PC-3 (cell line): ENCODE measurements at regions of chr4 and their contacts with region 1.

Region 1: DNA sequence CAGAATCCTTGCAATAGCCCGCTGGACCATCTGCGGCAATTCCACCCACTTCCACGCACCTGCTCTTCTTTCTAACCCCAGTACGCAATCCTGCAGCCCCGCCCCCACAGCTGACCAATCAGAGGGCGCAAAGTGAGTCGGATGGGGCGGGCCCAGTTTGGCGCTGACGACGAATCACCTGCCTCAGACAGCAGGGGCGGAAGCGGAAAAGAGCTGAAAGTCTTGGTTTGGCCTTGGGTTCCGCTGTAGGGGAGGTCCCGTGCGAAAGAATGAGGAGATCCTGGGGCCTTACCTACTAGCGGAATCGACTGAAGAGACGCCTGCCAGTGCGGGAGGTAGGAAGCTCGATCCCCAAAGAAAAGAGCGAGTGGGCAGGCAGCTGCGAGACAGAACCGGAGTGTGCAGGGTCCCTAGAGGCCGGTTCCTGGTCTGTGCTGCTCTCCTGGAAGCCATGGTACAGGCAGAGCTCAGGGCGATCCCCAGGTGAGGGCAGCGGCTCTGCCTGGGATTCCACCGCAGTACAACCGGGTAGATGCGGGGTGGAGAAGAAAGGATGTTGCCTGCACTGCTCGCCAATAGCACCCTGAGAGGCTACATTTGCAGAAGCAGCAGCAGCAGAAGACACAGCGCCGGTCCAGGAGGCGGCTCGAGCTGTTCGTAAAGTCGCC is at the start of gene TMEM184C:
- DNase-seq: peak; percentile 95
- ATAC-seq: peak; percentile 97
- H3K4me3 ChIP-seq: peak within 1 kb of the TSS; percentile 91
- H3K27ac ChIP-seq: peak within 1 kb of the TSS; percentile 65
- H3K4me1 ChIP-seq: peaks cover 17% of the 10 kb centered on the region
- H3K27me3 ChIP-seq: no peaks in the 10 kb centered on the region
- CTCF ChIP-seq: no peak
- total RNA-seq, gene TMEM184C: 17.5 and 19.8 TPM in 2 replicates

Region 2: GRCh38 chr4:147683717-147684700 is 66.7 kb after region 1 on chr4 and contains the start of gene PRMT9:
- CTCF ChIA-PET with region 1: no interaction called
- POLR2A ChIA-PET with region 1: no interaction called
- intact Hi-C with region 1: loop called (anchors 5 kb)
- DNase-seq: peak; percentile 87
- ATAC-seq: peak; percentile 97
- H3K4me3 ChIP-seq: peak within 1 kb of the TSS; percentile 93
- H3K27ac ChIP-seq: peak within 1 kb of the TSS; percentile 65
- H3K4me1 ChIP-seq: peaks cover 10% of the 10 kb centered on the region; the same call in 1 of the 2 replicates
- H3K27me3 ChIP-seq: no peaks in the 10 kb centered on the region
- CTCF ChIP-seq: no peak
- total RNA-seq, gene PRMT9: 4.6 and 6.5 TPM in 2 replicates